ENCODE measurements at regions of chr5 and their contacts with region 1.

Region 1: GRCh38 chr5:431001-431710 is 11.8 kb upstream of the EXOC3 start:
- DNase-seq: peak in 1 of 2 donors; percentile 46
- ATAC-seq: peak in 7 of 8 donors; percentile 67 to 82 (median 79)
- H3K4me3 ChIP-seq: no peak overlapping the region
- H3K27ac ChIP-seq: no peak overlapping the region
- H3K4me1 ChIP-seq: no peaks in the 10 kb centered on the region
- H3K27me3 ChIP-seq: peaks cover 0 to 39% (median 0%) of the 10 kb centered on the region in 7 donors
- CTCF ChIP-seq: peak; percentile 19 to 69 (median 59)

Region 2: GRCh38 chr5:188488-189481 is 242.4 kb before region 1 on chr5:
- intact Hi-C with region 1: loop called in 1 of 10 experiments (anchors 5 kb)
- DNase-seq: peak; percentile 88
- ATAC-seq: peak; percentile 17 to 75 (median 66)
- H3K4me3 ChIP-seq: peak overlapping the region in 7 of 10 donors; percentile 8 to 38 (median 22)
- H3K27ac ChIP-seq: peak overlapping the region in 7 of 10 donors; percentile 76 to 97 (median 92)
- H3K4me1 ChIP-seq: peaks cover 6 to 45% (median 22%) of the 10 kb centered on the region in 9 donors
- H3K27me3 ChIP-seq: peaks cover 0 to 27% (median 7%) of the 10 kb centered on the region in 7 donors
- CTCF ChIP-seq: peak; percentile 87 to 97 (median 94)

Region 3: GRCh38 chr5:217860-218456 is 213.2 kb before region 1 on chr5 and contains the starts of genes CCDC127 and SDHA:
- intact Hi-C with region 1: no loop called
- DNase-seq: peak; percentile 96 to 99
- ATAC-seq: peak; percentile 96 to 98 (median 97)
- H3K4me3 ChIP-seq: peak within 1 kb of the TSS; percentile 69 to 100 (median 96)
- H3K27ac ChIP-seq: peak within 1 kb of the TSS; percentile 90 to 99 (median 96)
- H3K4me1 ChIP-seq: peaks cover 3 to 54% (median 38%) of the 10 kb centered on the region in 9 donors
- H3K27me3 ChIP-seq: no peaks in the 10 kb centered on the region
- CTCF ChIP-seq: peak in 7 of 9 donors; percentile 17 to 67 (median 43)
- total RNA-seq, gene CCDC127: 5.0 to 10.4 (median 7.7) TPM
- total RNA-seq, gene SDHA: 557 to 897 (median 823) TPM

Region 4: GRCh38 chr5:317086-317811 is 113.9 kb before region 1 on chr5:
- intact Hi-C with region 1: loop called in 1 of 10 experiments (anchors 5 kb)
- DNase-seq: peak in 1 of 2 donors; percentile 37
- ATAC-seq: peak in 5 of 8 donors; percentile 28 to 48 (median 44)
- H3K4me3 ChIP-seq: no peak overlapping the region
- H3K27ac ChIP-seq: no peak overlapping the region
- H3K4me1 ChIP-seq: peaks cover 4 to 23% (median 17%) of the 10 kb centered on the region in 9 donors
- H3K27me3 ChIP-seq: peaks cover 19 to 40% (median 36%) of the 10 kb centered on the region in 7 donors
- CTCF ChIP-seq: peak in 7 of 9 donors; percentile 30 to 51 (median 35)

Measured in heart right ventricle (tissue), 16 donors.